Activated CD4-positive, alpha-beta T cell treated with anti-CD3 and anti-CD28 coated beads for 36 hours (primary cell): ENCODE measurements at regions of chr1 and their contacts with region 1.

Region 1: DNA sequence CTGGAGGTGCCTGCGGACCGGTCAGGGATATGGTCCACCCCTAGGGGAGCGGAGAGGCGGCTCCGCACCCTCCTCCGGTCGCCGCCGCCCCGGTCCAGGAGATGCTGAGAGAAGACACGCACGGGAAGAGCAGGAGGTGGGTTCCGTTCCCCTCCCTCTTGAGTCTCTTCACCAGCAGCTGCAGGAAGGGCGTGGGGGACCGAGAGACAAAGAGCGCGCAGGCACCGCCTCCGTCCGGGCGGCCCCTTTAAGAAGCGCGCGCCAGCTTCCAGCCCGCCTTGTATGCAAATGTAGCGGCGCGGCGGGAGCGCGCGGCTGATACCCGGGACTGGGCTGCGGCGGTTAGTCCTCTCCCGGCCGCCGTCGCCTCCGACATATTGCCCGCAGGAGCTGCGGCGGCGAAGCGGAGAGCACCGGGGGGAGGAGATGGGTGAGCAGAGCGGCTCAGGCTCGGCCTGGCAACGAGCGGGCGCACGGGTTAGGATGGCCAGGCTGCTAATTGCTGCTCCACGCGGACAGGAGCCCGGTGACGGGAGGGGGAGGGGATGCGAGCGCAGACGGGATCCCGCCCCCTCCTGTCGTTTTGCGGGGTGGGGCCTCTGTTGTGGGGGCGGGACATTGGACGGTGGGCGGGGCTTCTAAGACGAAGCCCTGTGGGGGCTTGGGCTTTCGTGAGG is at the start of gene TMEM39B:
- DNase-seq: peak; percentile 97
- ATAC-seq: peak; percentile 83
- H3K4me3 Mint-ChIP-seq: peak within 1 kb of the TSS; percentile 90
- H3K27ac Mint-ChIP-seq: peak within 1 kb of the TSS; percentile 98
- H3K4me1 Mint-ChIP-seq: peaks cover 37% of the 10 kb centered on the region
- H3K27me3 Mint-ChIP-seq: no peaks in the 10 kb centered on the region
- total RNA-seq, gene TMEM39B: 25.2 to 29.8 TPM

Region 2: DNA sequence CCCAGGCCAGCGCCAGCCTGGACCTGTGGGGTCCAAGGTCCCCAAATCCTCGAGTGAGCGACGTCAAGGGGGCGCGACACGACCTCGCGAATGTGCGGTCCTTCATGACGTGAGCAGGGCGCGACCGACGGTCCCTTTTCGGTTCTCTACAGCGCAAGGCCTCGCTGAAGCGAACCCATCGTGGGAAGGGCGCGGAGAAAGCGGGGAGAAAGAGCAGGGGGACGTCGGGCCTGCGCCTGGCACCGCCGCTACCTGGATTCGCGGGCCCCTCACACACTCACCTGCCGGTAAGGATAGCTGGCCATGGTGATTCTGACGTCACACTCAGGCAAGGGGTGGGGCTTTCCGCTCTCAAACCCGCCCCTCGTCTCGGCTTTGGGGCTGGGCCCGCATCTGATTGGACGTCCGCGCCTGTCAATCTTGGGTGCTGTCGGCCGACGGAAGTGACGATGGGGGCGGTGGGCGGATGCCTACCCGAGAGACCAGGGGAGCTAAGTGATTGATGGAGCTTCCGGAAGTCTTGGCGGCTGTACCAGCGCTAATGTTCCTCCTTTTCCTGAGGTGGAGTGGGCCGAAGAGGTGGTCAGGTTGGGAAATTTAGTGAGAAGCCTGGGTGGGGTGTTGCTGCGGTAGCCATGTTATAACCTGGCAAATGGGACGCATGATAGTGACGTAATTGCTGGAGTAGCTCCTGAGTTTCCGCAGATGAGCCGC is 428.0 kb before region 1 on chr1 and contains the start of gene PEF1:
- CTCF ChIA-PET with region 1: no interaction called
- POLR2A ChIA-PET with region 1: no interaction called
- intact Hi-C with region 1: loop called in 1 of 2 experiments (anchors 1 kb)
- DNase-seq: peak; percentile 100
- ATAC-seq: peak; percentile 91
- H3K4me3 Mint-ChIP-seq: peak within 1 kb of the TSS; percentile 95
- H3K27ac Mint-ChIP-seq: peak within 1 kb of the TSS; percentile 100
- H3K4me1 Mint-ChIP-seq: peaks cover 23% of the 10 kb centered on the region
- H3K27me3 Mint-ChIP-seq: no peaks in the 10 kb centered on the region
- total RNA-seq, gene PEF1: 48.8 to 59.3 TPM

Region 3: DNA sequence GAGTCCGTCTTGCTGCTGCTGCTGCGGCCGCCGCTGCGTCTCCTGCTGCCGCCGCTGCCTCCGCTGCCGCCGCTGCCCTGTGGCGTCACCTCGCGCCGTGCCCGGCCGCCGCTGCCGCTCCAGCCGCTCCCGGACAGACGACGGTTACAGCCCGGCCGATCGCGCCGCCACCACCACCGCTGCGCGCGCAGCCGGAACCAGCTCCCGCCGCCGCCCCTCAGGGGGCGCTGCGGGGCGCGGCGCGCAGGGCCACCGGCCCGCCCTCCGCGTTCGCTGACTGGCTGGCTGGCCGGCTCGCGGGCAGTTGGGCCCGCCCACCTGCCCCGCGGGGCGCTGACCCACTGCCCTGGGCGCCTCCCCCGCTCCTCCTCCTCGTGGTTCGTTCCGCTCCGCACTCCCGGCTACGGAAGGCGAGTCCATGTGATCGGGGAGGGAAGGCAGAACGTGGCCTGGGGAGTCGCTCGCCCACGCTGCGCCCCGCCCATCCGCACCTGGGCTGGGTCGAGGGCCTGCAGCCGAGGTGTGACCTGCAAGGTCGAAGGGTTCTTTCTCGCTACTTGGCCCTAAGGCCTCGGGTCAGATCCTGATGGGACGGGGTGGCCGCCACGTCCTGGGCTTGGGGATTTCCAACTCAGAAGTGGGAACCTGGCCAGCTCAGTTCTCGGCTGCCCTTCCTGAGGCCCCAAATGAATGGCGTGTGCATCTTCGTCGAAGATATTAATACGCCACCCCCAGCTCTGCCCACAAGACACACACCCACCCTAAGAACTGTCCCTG is 134.4 kb before region 1 on chr1 and contains the start of gene PTP4A2:
- CTCF ChIA-PET with region 1: no interaction called
- POLR2A ChIA-PET with region 1: no interaction called
- intact Hi-C with region 1: loop called in 1 of 2 experiments (anchors 1 kb)
- DNase-seq: peak; percentile 93
- ATAC-seq: peak; percentile 63
- H3K4me3 Mint-ChIP-seq: peak within 1 kb of the TSS; percentile 91
- H3K27ac Mint-ChIP-seq: peak within 1 kb of the TSS; percentile 99
- H3K4me1 Mint-ChIP-seq: peaks cover 63% of the 10 kb centered on the region
- H3K27me3 Mint-ChIP-seq: no peaks in the 10 kb centered on the region
- total RNA-seq, gene PTP4A2: 279 to 314 TPM

Region 4: DNA sequence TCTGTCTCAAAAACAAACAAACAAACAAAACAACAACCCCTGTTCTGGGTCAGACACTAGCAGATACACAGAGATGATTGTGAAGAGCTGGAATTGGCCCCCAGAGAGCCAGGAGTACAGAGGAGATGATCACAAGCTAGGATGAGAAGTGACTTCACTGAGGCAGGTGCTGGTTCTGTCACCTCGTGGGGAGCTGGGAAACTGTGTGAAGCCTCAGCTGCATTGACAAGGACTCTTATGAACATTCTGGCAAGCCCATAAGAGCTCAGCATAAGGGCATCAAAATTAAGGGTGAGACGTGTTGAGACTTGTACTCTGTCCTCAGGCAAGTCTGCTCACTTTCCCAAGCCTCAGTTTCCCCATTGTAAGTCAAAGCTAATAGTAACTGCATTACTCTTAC is 119.9 kb before region 1 on chr1:
- CTCF ChIA-PET with region 1: no interaction called
- POLR2A ChIA-PET with region 1: no interaction called
- intact Hi-C with region 1: no loop called
- DNase-seq: no peak
- ATAC-seq: no peak
- H3K4me3 Mint-ChIP-seq: no peak overlapping the region
- H3K27ac Mint-ChIP-seq: no peak overlapping the region
- H3K4me1 Mint-ChIP-seq: peaks cover 58% of the 10 kb centered on the region
- H3K27me3 Mint-ChIP-seq: no peaks in the 10 kb centered on the region

Region 5: DNA sequence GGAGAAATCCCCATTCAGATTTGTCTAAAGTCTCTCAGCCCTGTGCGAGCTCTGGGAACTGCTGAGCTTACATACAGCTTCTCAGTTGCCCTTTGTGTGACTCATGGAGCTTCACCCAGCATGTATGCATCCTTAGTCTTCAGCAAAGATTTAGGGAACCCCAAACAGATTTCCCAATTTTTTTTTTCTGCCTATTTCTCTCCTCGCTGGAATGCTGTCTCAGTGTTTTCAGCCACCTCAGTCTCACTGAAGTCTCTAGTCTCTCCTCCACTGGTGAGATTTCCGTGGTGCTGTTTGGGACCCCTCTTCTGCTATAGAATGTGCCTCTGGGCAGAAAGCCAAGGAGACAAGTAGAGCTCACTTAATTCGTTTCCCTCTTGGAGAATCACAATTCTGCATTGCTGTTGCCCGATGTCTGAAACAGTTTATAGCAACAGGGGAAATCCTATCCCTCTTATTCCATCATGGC is 78.6 kb after region 1 on chr1:
- CTCF ChIA-PET with region 1: no interaction called
- POLR2A ChIA-PET with region 1: no interaction called
- intact Hi-C with region 1: no loop called
- DNase-seq: no peak
- ATAC-seq: no peak
- H3K4me3 Mint-ChIP-seq: no peak overlapping the region
- H3K27ac Mint-ChIP-seq: no peak overlapping the region
- H3K4me1 Mint-ChIP-seq: peaks cover 15% of the 10 kb centered on the region
- H3K27me3 Mint-ChIP-seq: no peaks in the 10 kb centered on the region

Region 6: GRCh38 chr1:32179443-32180185 is 106.9 kb after region 1 on chr1 and contains the start of gene TXLNA:
- CTCF ChIA-PET with region 1: no interaction called
- POLR2A ChIA-PET with region 1: interaction called, 7 read pairs
- intact Hi-C with region 1: loop called (anchors 1 kb)
- DNase-seq: peak; percentile 96
- ATAC-seq: peak; percentile 93
- H3K4me3 Mint-ChIP-seq: peak within 1 kb of the TSS; percentile 86
- H3K27ac Mint-ChIP-seq: peak within 1 kb of the TSS; percentile 98
- H3K4me1 Mint-ChIP-seq: peaks cover 44% of the 10 kb centered on the region
- H3K27me3 Mint-ChIP-seq: no peaks in the 10 kb centered on the region
- total RNA-seq, gene TXLNA: 79.5 to 79.7 TPM

Region 7: GRCh38 chr1:32335790-32336590 is 263.2 kb after region 1 on chr1 and contains the start of gene MARCKSL1:
- CTCF ChIA-PET with region 1: no interaction called
- POLR2A ChIA-PET with region 1: interaction called, 3 read pairs
- intact Hi-C with region 1: loop called in 1 of 2 experiments (anchors 1 kb)
- DNase-seq: peak; percentile 88
- ATAC-seq: peak; percentile 50
- H3K4me3 Mint-ChIP-seq: peak within 1 kb of the TSS; percentile 77
- H3K27ac Mint-ChIP-seq: peak within 1 kb of the TSS; percentile 76
- H3K4me1 Mint-ChIP-seq: peaks cover 52% of the 10 kb centered on the region
- H3K27me3 Mint-ChIP-seq: no peaks in the 10 kb centered on the region
- total RNA-seq, gene MARCKSL1: 27.0 to 29.3 TPM

Region 8: DNA sequence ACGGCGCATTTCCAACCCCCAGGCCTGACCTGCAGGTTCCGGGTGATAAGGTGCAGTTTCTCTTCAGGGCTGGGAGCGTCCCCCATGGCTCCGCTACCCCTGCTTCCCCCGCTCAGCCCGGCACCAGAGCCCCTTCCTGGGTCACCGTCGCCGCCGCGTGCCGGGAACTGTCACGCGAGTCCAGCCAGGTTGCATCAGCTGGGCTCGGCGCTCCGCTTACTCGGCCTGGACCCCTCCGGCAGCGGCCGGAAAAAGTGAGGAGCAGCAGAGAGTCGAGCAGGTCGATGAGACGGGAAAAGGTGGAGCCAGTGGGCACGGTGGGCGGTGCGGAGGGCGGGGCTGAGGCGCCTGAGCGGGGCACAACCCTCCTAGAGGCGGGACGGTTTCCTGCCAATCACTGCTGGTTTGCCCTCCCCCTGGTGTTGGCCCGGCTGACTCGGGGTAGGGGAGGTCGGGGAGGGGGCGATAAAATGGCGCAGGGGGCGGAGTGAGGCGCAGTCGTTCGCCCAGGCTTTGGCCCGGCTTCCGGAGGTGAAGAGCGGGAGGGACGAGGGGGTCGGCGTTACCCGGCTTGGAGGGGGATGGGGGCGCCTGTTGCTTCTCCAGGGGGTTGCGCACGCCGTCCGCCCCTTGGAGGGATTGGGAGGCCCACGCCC is 744.5 kb after region 1 on chr1 and contains the starts of genes S100PBP and YARS1:
- CTCF ChIA-PET with region 1: no interaction called
- POLR2A ChIA-PET with region 1: no interaction called
- intact Hi-C with region 1: loop called in 1 of 2 experiments (anchors 1 kb)
- DNase-seq: peak; percentile 100
- ATAC-seq: peak; percentile 96
- H3K4me3 Mint-ChIP-seq: peak within 1 kb of the TSS; percentile 97
- H3K27ac Mint-ChIP-seq: peak within 1 kb of the TSS; percentile 99
- H3K4me1 Mint-ChIP-seq: peaks cover 48% of the 10 kb centered on the region
- H3K27me3 Mint-ChIP-seq: no peaks in the 10 kb centered on the region
- total RNA-seq, gene S100PBP: 27.9 to 34.3 TPM
- total RNA-seq, gene YARS1: 259 to 309 TPM